ENCODE measurements at regions of chr12 and their contacts with region 1.

Region 1: DNA sequence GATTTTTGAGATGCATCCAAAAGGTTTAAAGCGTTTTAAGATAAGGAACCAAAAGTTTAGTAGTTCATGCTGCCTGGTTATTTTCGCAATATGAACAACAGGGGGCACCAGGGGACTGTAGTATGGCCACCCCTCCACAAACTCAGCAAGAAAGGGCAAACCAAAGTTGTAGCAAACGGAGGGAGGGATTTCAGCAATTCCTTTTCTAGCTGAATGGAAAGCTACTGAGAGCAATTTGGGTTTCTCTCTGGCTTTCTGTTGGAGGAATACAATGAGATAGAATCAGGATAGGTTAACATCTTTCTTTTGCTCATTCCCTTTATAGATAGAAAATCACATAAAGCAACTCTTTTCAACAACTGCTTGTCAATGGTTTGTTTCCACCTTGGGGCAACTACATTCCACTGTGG is 62.5 kb downstream of the DRAM1 start:
- DNase-seq: peak; percentile 83
- ATAC-seq: peak; percentile 66
- H3K4me3 ChIP-seq: no peak overlapping the region
- H3K4me3 Mint-ChIP-seq: no peak overlapping the region
- H3K27ac ChIP-seq: no peak overlapping the region
- H3K27ac Mint-ChIP-seq: peak overlapping the region; percentile 42
- H3K4me1 ChIP-seq: peaks cover 49 to 53% of the 10 kb centered on the region in 2 donors
- H3K4me1 Mint-ChIP-seq: peaks cover 58% of the 10 kb centered on the region
- H3K27me3 ChIP-seq: no peaks in the 10 kb centered on the region
- H3K27me3 Mint-ChIP-seq: no peaks in the 10 kb centered on the region
- CTCF ChIP-seq: peak; percentile 91

Region 2: GRCh38 chr12:101407436-101408345 is 532.2 kb before region 1 on chr12 and contains the start of gene ARL1:
- CTCF ChIA-PET with region 1: no interaction called
- POLR2A ChIA-PET with region 1: no interaction called
- intact Hi-C with region 1: loop called (anchors 5 kb)
- DNase-seq: peak; percentile 92
- ATAC-seq: peak; percentile 86
- H3K4me3 ChIP-seq: peak within 1 kb of the TSS; percentile 80 to 95 (median 93)
- H3K4me3 Mint-ChIP-seq: peak within 1 kb of the TSS; percentile 99
- H3K27ac ChIP-seq: peak within 1 kb of the TSS; percentile 91 to 96
- H3K27ac Mint-ChIP-seq: peak within 1 kb of the TSS; percentile 97
- H3K4me1 ChIP-seq: peaks cover 9 to 12% of the 10 kb centered on the region in 2 donors
- H3K4me1 Mint-ChIP-seq: peaks cover 28% of the 10 kb centered on the region
- H3K27me3 ChIP-seq: no peaks in the 10 kb centered on the region
- H3K27me3 Mint-ChIP-seq: peaks cover 5% of the 10 kb centered on the region
- CTCF ChIP-seq: no peak
- total RNA-seq, gene ARL1: 40.7 and 51.2 TPM in 2 replicates

Region 3: DNA sequence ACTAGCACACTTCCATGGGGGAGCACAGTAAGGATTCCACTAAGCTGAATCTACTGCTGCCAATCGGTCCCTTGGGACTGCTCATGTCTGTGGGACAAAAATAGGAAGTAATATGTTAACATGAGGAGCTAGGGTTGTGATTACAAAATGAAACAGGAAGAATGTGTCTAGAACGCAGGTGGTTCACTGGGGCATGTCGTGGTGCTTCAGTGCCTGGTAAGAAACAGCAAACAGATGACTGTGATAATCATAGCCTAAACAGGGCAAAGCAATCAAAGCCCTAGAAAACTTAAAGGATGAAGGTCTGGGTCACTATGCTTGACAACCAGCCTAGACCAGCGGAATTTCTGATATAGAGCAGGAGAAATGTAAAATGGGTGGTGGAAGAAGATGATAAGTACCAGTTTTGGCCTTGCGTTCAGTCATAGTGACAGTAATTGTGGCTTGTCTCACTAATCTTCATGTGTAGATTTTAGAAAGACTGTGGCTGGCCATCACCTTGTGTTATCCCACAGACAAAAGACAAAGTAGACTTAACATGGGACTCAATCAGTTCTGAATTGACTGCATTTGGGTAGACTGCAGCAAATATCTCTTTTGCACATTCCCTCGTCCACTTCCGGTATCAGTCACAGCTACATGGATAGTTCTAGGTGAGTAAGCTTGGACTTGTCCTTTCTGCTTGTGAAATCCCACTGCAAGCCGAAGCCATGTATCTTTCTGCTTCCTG is 70.6 kb after region 1 on chr12:
- CTCF ChIA-PET with region 1: interaction called, 8 read pairs
- POLR2A ChIA-PET with region 1: no interaction called
- intact Hi-C with region 1: loop called (anchors 2 kb)
- DNase-seq: peak; percentile 90
- ATAC-seq: peak; percentile 97
- H3K4me3 ChIP-seq: peak overlapping the region in 3 of 5 experiments; percentile 16 to 43 (median 20)
- H3K4me3 Mint-ChIP-seq: peak overlapping the region; percentile 73
- H3K27ac ChIP-seq: peak overlapping the region; percentile 55 to 79
- H3K27ac Mint-ChIP-seq: peak overlapping the region; percentile 91
- H3K4me1 ChIP-seq: peaks cover 20 to 22% of the 10 kb centered on the region in 2 donors
- H3K4me1 Mint-ChIP-seq: peaks cover 35% of the 10 kb centered on the region
- H3K27me3 ChIP-seq: no peaks in the 10 kb centered on the region
- H3K27me3 Mint-ChIP-seq: no peaks in the 10 kb centered on the region
- CTCF ChIP-seq: no peak

Region 4: GRCh38 chr12:102119674-102120563 is 180.1 kb after region 1 on chr12 and contains the starts of genes NUP37 and PARPBP:
- CTCF ChIA-PET with region 1: no interaction called
- POLR2A ChIA-PET with region 1: no interaction called
- intact Hi-C with region 1: loop called (anchors 5 kb)
- DNase-seq: peak; percentile 92
- ATAC-seq: peak; percentile 98
- H3K4me3 ChIP-seq: peak within 1 kb of the TSS; percentile 82 to 90 (median 84)
- H3K4me3 Mint-ChIP-seq: peak within 1 kb of the TSS; percentile 89
- H3K27ac ChIP-seq: peak within 1 kb of the TSS; percentile 80 to 88
- H3K27ac Mint-ChIP-seq: peak within 1 kb of the TSS; percentile 91
- H3K4me1 ChIP-seq: peaks cover 15 to 18% of the 10 kb centered on the region in 2 donors
- H3K4me1 Mint-ChIP-seq: peaks cover 16% of the 10 kb centered on the region
- H3K27me3 ChIP-seq: no peaks in the 10 kb centered on the region
- H3K27me3 Mint-ChIP-seq: no peaks in the 10 kb centered on the region
- CTCF ChIP-seq: no peak
- total RNA-seq, gene NUP37: 19.1 and 22.1 TPM in 2 replicates
- total RNA-seq, gene PARPBP: 5.2 and 6.6 TPM in 2 replicates

Region 5: DNA sequence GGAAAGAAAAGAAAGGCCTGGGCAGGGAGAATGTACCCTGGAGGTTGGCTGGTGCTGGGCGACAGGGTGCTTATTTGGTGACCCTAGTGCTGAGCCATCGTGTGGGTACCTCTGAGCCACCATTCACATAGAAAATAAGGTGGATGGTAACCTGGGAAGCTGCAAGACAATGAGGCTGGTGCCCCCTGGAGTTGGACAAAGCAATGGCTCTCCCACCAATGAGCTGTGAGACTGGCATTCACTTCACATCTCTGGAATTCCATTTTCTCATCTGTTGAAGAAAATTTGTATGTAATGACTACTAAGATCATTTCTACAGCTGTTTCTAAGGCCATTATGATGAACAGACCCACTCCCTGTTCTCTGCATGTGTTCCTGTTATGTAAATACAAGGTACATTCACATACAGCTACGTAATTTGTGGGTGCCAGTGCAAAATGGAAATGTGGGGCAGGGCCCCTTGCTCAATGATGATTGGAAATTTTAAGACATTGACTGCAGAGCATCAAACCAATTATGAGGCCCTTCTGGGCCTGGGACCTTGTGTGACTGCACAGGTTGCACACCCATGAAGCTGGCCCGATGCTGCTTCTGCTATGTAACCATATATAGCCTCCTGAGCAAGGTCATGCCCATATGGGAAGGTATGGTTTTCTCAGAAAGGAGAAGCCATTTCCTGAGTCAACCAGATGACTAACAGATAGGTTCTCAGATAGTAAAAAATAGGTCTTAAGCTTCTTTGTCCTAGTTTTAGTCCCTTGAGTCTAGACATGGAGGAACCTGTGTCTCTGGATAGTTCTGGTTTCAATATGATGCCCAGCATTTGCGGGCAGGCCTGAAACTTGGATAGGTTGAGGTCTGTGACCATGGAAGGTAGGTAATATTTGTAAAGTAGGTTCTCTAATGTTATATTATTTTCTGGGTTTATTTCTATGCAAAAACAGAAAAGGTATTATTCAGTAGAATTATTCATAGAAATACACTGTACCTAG is 603.9 kb after region 1 on chr12:
- CTCF ChIA-PET with region 1: interaction called, 5 read pairs
- POLR2A ChIA-PET with region 1: no interaction called
- intact Hi-C with region 1: loop called (anchors 2 kb)
- DNase-seq: peak; percentile 9
- ATAC-seq: no peak
- H3K4me3 ChIP-seq: no peak overlapping the region
- H3K4me3 Mint-ChIP-seq: no peak overlapping the region
- H3K27ac ChIP-seq: no peak overlapping the region
- H3K27ac Mint-ChIP-seq: no peak overlapping the region
- H3K4me1 ChIP-seq: no peaks in the 10 kb centered on the region
- H3K4me1 Mint-ChIP-seq: no peaks in the 10 kb centered on the region
- H3K27me3 ChIP-seq: peaks cover 0 to 9% (median 0%) of the 10 kb centered on the region in 4 experiments
- H3K27me3 Mint-ChIP-seq: peaks cover 31% of the 10 kb centered on the region
- CTCF ChIP-seq: peak; percentile 13

Region 6: GRCh38 chr12:102740141-102740955 is 800.5 kb after region 1 on chr12:
- CTCF ChIA-PET with region 1: interaction called, 10 read pairs
- POLR2A ChIA-PET with region 1: no interaction called
- intact Hi-C with region 1: loop called (anchors 1 kb)
- DNase-seq: peak; percentile 13
- ATAC-seq: no peak
- H3K4me3 ChIP-seq: no peak overlapping the region
- H3K4me3 Mint-ChIP-seq: no peak overlapping the region
- H3K27ac ChIP-seq: no peak overlapping the region
- H3K27ac Mint-ChIP-seq: no peak overlapping the region
- H3K4me1 ChIP-seq: peaks cover 2 to 4% of the 10 kb centered on the region in 2 donors
- H3K4me1 Mint-ChIP-seq: peaks cover 4% of the 10 kb centered on the region
- H3K27me3 ChIP-seq: peaks cover 0 to 5% (median 0%) of the 10 kb centered on the region in 4 experiments
- H3K27me3 Mint-ChIP-seq: peaks cover 7% of the 10 kb centered on the region
- CTCF ChIP-seq: peak; percentile 21

Region 7: GRCh38 chr12:102816816-102817434 is 877.1 kb after region 1 on chr12:
- CTCF ChIA-PET with region 1: interaction called, 4 read pairs
- POLR2A ChIA-PET with region 1: no interaction called
- intact Hi-C with region 1: loop called (anchors 5 kb)
- DNase-seq: peak; percentile 11
- ATAC-seq: no peak
- H3K4me3 ChIP-seq: no peak overlapping the region
- H3K4me3 Mint-ChIP-seq: no peak overlapping the region
- H3K27ac ChIP-seq: no peak overlapping the region
- H3K27ac Mint-ChIP-seq: no peak overlapping the region
- H3K4me1 ChIP-seq: no peaks in the 10 kb centered on the region
- H3K4me1 Mint-ChIP-seq: no peaks in the 10 kb centered on the region
- H3K27me3 ChIP-seq: peaks cover 0 to 5% (median 2%) of the 10 kb centered on the region in 4 experiments
- H3K27me3 Mint-ChIP-seq: peaks cover 40% of the 10 kb centered on the region
- CTCF ChIP-seq: peak; percentile 75